ENCODE measurements at regions of chr1 and their contacts with region 1.

Region 1: GRCh38 chr1:155050560-155051341 is at the start of gene ADAM15:
- DNase-seq: peak; percentile 73 to 82 (median 77)
- H3K4me3 ChIP-seq: peak within 1 kb of the TSS; percentile 67
- H3K4me3 Mint-ChIP-seq: peak within 1 kb of the TSS; percentile 84 to 90 (median 86)
- H3K27ac ChIP-seq: peak within 1 kb of the TSS; percentile 46
- H3K27ac Mint-ChIP-seq: peak within 1 kb of the TSS; percentile 50 to 96 (median 68)
- H3K4me1 ChIP-seq: peaks cover 21% of the 10 kb centered on the region
- H3K4me1 Mint-ChIP-seq: peaks cover 23 to 33% (median 23%) of the 10 kb centered on the region in 3 donors
- H3K27me3 ChIP-seq: no peaks in the 10 kb centered on the region
- H3K27me3 Mint-ChIP-seq: peaks cover 0 to 1% of the 10 kb centered on the region in 2 donors
- total RNA-seq, gene ADAM15: 34.5 to 36.9 TPM

Region 2: DNA sequence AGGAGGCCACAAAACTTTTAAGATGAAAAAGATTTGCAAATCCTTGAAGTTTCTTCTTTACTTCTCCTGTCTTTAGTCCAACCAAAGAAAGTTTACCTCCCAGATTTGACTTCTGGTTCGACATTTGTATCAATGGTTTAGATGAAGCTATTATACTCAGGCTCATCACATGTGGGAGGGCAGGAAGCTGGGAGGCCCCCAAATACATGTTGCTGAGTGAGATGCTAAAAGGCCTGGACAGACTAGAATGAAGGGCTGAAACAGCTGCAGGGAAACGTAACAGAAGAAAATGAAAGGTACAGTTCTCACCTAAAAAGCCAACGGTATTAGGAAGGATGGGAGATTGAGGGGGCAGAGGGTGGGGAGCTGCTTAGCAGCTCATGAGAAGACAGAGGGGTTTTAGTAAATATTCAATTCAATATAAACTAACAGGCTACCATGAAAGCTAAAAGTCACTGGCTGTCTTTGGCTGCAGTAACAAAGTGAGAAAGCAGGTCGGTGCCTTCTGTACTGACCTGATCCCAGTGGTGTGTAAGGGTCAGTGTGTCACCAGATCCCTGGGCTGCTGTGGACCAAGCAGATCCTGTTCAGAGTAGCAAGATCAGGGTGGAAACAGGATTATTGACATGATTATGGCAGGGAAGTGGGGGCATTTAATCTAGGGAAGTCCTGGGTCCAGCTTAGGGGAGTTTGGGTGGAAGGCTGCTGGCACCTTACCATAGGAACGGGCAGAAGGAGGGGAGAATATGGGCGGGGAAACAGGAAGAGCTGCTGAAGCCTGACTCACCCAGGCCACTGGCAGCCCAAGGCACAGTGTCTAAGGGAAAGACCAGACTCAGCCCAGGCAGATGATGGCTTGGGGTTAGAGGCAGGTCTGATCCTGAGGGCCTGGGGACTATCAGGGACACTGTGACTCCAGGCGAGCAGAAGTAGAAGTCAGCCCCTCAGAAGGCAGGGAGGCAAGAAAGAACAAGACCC is 241.0 kb before region 1 on chr1:
- CTCF ChIA-PET with region 1: no interaction called
- POLR2A ChIA-PET with region 1: no interaction called
- DNase-seq: peak in 1 of 5 donors; percentile 27
- H3K4me3 ChIP-seq: no peak overlapping the region
- H3K4me3 Mint-ChIP-seq: no peak overlapping the region
- H3K27ac ChIP-seq: no peak overlapping the region
- H3K27ac Mint-ChIP-seq: peak overlapping the region in 3 of 8 donors; percentile 25 to 42 (median 29)
- H3K4me1 ChIP-seq: no peaks in the 10 kb centered on the region
- H3K4me1 Mint-ChIP-seq: peaks cover 0 to 2% (median 0%) of the 10 kb centered on the region in 3 donors
- H3K27me3 ChIP-seq: no peaks in the 10 kb centered on the region
- H3K27me3 Mint-ChIP-seq: peaks cover 10 to 24% of the 10 kb centered on the region in 2 donors

Region 3: DNA sequence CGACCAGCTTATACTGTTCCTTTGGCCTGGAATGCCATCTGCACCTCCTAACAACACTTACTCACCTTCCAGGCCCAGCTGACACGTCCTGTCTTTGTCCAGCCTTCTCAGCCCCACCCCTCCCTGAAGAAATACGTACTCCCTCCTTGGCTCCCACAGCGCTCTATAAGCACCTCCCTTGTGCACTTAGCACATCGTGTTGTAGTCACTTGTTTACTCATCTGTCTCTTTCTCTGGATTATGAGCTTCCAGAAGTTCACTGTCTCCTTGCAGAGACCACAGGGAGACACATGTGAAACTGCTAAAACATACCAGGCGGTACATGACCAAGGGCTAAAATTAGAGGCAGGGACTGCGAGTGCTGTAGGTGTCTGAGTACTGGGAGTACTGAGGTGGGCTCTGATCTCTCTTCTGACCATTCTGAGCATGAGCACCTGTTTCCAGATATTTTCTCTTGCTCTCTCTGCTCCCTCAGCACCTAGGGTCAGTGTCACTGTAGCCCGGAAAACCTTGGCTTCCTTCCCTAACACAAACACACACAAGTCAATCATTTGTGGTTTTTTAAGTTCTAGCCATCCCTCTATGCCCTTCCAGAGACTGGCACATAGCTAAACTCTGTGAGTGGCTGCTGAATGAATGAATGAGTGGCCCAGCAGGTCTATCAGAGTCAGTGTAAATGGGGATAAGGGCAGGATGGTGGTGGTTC is 12.0 kb before region 1 on chr1:
- CTCF ChIA-PET with region 1: interaction called, 172 read pairs
- POLR2A ChIA-PET with region 1: no interaction called
- DNase-seq: no peak
- H3K4me3 ChIP-seq: no peak overlapping the region
- H3K4me3 Mint-ChIP-seq: no peak overlapping the region
- H3K27ac ChIP-seq: no peak overlapping the region
- H3K27ac Mint-ChIP-seq: peak overlapping the region in 3 of 8 donors; percentile 9 to 70 (median 42)
- H3K4me1 ChIP-seq: no peaks in the 10 kb centered on the region
- H3K4me1 Mint-ChIP-seq: no peaks in the 10 kb centered on the region
- H3K27me3 ChIP-seq: no peaks in the 10 kb centered on the region
- H3K27me3 Mint-ChIP-seq: peaks cover 5 to 23% of the 10 kb centered on the region in 2 donors

Region 4: GRCh38 chr1:155070721-155071569 is 20.2 kb after region 1 on chr1:
- CTCF ChIA-PET with region 1: interaction called, 12 read pairs
- POLR2A ChIA-PET with region 1: interaction called, 8 read pairs
- DNase-seq: peak; percentile 57 to 87 (median 76)
- H3K4me3 ChIP-seq: peak overlapping the region; percentile 74
- H3K4me3 Mint-ChIP-seq: peak overlapping the region; percentile 23 to 68 (median 37)
- H3K27ac ChIP-seq: peak overlapping the region; percentile 43
- H3K27ac Mint-ChIP-seq: peak overlapping the region in 2 of 8 donors; percentile 32 to 43
- H3K4me1 ChIP-seq: peaks cover 20% of the 10 kb centered on the region
- H3K4me1 Mint-ChIP-seq: peaks cover 14 to 41% (median 28%) of the 10 kb centered on the region in 3 donors
- H3K27me3 ChIP-seq: no peaks in the 10 kb centered on the region
- H3K27me3 Mint-ChIP-seq: no peaks in the 10 kb centered on the region